PC-9 (cell line): ENCODE measurements at regions of chr14 and their contacts with region 1.

Region 1: DNA sequence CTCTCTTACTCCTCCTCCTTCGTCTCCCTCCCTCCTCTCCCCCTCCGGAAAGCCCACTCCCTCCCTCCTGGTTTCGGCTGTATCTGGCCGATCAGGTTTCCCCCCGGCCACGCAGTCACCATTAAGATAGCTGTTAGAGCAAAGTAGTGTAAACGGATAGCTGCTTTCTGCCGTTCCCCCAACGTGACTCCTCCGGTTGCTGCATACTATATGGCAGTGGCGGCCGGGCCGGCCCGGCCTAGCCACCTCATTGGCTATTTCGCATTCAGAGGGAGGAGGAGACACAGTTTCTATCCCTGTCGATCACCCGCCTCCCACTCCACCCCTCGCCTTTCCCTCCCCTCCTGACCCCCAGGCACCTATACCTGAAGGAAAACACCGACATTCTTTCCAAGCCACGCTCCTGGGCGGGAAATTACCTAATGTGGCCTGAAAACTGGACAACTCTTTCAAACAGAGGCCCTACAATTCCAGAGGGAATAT is at the start of gene SIX4:
- DNase-seq: peak; percentile 89 to 93
- H3K4me3 ChIP-seq: peak within 1 kb of the TSS; percentile 78
- H3K27ac ChIP-seq: peak within 1 kb of the TSS; percentile 80
- H3K4me1 ChIP-seq: peaks cover 26% of the 10 kb centered on the region
- H3K27me3 ChIP-seq: no peaks in the 10 kb centered on the region
- CTCF ChIP-seq: no peak
- total RNA-seq, gene SIX4: 31.0 and 35.7 TPM in 2 replicates

Region 2: GRCh38 chr14:60276342-60276741 is 447.8 kb before region 1 on chr14:
- CTCF ChIA-PET with region 1: no interaction called
- POLR2A ChIA-PET with region 1: no interaction called
- intact Hi-C with region 1: no loop called
- DNase-seq: no peak
- H3K4me3 ChIP-seq: no peak overlapping the region
- H3K27ac ChIP-seq: no peak overlapping the region
- H3K4me1 ChIP-seq: peaks cover 12% of the 10 kb centered on the region; the same call in 1 of the 2 replicates
- H3K27me3 ChIP-seq: no peaks in the 10 kb centered on the region
- CTCF ChIP-seq: no peak

Region 3: GRCh38 chr14:60734465-60735242 is 10.5 kb after region 1 on chr14 and contains the start of gene MNAT1:
- CTCF ChIA-PET with region 1: no interaction called
- POLR2A ChIA-PET with region 1: interaction called, 9 read pairs
- intact Hi-C with region 1: loop called (anchors 1 kb)
- DNase-seq: peak; percentile 74 to 83
- H3K4me3 ChIP-seq: peak within 1 kb of the TSS; percentile 73
- H3K27ac ChIP-seq: peak within 1 kb of the TSS; percentile 31
- H3K4me1 ChIP-seq: peaks cover 24% of the 10 kb centered on the region
- H3K27me3 ChIP-seq: no peaks in the 10 kb centered on the region
- CTCF ChIP-seq: no peak
- total RNA-seq, gene MNAT1: 79.7 and 93.3 TPM in 2 replicates

Region 4: DNA sequence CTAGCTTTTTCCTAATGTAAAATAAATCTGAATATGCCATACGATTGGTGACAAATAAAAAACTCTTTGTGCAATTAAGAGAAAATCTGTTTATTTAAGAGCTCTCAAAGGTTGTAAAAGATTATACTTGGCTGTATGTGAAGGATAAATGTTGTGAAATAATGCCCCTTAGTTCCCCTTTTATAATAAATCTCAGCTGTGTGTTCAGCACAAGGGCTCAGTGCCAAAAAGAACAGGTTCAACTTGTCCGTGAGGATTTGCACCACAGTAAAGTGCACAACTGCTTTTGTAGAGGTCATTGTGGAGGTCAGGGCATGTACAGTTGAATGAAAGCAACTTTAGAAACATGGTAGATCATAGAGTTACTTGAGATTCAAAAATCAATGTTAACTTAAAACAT is 138.1 kb after region 1 on chr14:
- CTCF ChIA-PET with region 1: no interaction called
- POLR2A ChIA-PET with region 1: interaction called, 12 read pairs
- intact Hi-C with region 1: loop called (anchors 1 kb)
- DNase-seq: peak; percentile 72 to 84
- H3K4me3 ChIP-seq: peak overlapping the region; percentile 4; the same call in 1 of the 2 replicates
- H3K27ac ChIP-seq: peak overlapping the region; percentile 49
- H3K4me1 ChIP-seq: peaks cover 32% of the 10 kb centered on the region
- H3K27me3 ChIP-seq: no peaks in the 10 kb centered on the region
- CTCF ChIP-seq: no peak

Region 5: DNA sequence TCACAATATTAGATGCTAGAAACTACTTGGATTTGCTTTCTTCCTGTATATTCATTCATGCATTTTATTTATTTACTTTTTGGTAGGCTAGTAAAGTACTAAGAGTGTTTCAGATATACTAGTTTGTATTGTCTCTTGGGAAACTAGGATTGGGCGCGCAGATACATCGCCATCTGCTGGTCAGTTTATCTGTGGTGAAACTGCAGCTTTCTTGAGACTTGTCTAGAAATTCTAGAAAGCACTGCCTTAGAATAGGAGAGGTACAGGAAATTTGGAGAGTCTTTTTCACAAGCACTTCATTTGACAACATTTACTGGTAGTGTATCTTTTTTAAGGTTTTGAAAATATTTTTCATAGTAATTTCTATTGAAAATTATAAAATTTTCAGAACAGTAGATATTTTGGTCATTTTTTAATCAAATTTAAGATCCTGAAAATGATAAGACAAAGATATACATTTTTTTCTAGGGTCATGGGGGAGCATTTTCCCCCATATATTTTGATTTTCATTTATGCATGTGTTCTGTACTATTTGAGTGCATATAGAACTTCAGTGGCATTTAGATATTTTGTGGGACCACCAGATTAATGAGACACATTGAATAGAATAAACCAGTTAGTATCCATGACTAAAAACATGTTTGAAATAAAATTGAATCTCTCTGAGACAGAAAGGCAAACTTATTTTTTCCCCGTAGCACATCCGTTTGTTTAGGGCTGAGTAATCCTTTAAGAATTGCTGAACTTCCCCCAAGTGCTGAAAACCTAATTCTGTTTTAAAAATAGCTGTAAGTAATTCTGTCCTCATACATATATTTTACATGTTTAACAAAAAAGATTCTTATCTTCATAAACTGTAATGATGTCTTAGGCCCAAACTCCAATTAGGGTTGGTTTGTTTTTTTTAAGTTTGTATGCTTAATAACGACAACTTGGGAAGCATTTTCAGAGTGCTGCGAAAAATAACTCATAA is 301.4 kb after region 1 on chr14:
- CTCF ChIA-PET with region 1: no interaction called
- POLR2A ChIA-PET with region 1: interaction called, 4 read pairs
- intact Hi-C with region 1: loop called (anchors 2 kb)
- DNase-seq: peak; percentile 62 to 65
- H3K4me3 ChIP-seq: no peak overlapping the region
- H3K27ac ChIP-seq: peak overlapping the region; percentile 38
- H3K4me1 ChIP-seq: peaks cover 9% of the 10 kb centered on the region
- H3K27me3 ChIP-seq: no peaks in the 10 kb centered on the region
- CTCF ChIP-seq: peak; percentile 93

Region 6: DNA sequence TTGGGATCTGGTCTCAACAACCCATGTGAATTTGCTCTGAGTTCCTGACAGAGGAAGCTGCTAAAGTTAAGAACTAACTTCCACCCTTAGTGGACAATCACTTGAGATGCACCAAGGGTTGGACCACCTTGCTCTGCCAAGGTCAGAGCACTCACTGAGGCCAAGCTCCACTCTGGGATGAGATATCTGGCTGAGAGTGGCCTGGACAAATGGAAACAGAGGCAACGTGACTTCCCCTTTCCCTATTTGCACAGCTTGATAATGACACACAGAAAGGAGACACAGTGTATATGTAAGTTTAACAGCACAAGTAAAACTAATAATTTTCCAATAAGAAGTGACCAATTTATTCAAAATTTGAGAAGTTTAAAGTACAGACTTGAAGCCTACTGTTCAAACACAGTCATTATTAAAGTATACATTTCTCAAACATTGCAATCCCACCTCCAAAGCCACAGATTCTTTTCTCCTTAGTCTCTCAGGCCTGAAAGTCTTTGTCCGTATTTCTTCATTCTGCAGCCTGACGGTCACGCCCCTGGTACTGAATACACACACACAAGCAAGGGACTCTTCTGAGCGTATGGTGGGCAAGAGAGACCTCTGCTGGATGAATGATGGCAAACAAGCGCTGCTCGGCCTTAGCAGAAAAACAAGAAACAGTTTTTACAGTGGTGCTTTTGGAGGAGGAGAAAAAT is 528.3 kb after region 1 on chr14:
- CTCF ChIA-PET with region 1: no interaction called
- POLR2A ChIA-PET with region 1: no interaction called
- intact Hi-C with region 1: loop called (anchors 5 kb)
- DNase-seq: peak; percentile 83 to 94
- H3K4me3 ChIP-seq: no peak overlapping the region
- H3K27ac ChIP-seq: peak overlapping the region; percentile 56
- H3K4me1 ChIP-seq: peaks cover 7% of the 10 kb centered on the region
- H3K27me3 ChIP-seq: no peaks in the 10 kb centered on the region
- CTCF ChIP-seq: peak; percentile 94